Ascending aorta (tissue), 2 donors: ENCODE measurements at regions of chr18 and their contacts with region 1.

Region 1: GRCh38 chr18:3585656-3586509 is 135.9 kb downstream of the TGIF1 start:
- DNase-seq: peak in 1 of 2 donors; percentile 85
- H3K4me3 ChIP-seq: no peak overlapping the region
- H3K27ac ChIP-seq: no peak overlapping the region
- H3K4me1 ChIP-seq: no peaks in the 10 kb centered on the region
- H3K27me3 ChIP-seq: no peaks in the 10 kb centered on the region
- CTCF ChIP-seq: peak; percentile 41 to 63 (median 48)

Region 2: DNA sequence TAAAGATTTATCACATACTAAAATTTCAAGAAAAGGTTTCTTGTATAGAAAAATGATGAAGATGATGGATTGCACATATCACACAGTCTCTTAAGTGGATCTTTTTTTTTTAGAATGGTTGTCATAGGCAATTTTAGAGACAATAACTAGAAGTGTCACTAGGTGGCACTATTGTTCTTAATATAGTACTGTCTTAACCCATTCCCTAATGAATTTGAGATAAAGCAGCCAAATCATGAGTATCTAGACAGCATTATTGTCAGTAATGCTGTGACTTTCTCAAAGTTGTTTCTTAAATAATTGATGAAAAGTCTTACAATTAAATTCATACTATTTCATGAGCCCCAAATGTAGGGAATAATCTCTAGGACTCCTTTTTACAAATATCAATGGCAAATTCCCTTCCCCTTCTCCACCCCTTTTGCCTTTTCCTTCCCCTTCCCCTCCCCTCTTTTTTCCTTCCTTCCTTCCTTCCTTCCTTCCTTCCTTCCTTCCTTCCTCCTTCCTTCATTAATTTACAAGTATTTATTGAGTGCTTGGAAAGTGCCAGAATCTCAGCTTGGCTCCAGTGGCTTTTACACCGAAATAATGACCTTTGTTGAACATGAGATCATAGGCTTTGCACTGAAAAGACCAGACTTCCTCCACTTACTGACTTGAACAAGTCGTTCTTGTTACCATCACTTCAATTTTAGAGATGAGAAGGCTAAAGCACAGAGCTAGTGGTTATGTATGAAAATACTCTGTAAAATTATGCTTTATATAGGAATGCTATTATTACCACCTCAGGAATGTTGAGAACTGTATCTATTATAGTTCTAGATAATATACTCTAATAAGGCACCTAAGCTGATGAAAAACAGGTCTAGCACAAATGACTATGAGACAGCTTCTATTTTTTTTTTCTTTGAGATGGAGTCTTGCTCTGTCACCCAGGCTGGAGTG is 304.2 kb before region 1 on chr18:
- intact Hi-C with region 1: loop called (anchors 2 kb)
- DNase-seq: no peak
- H3K4me3 ChIP-seq: no peak overlapping the region
- H3K27ac ChIP-seq: no peak overlapping the region
- H3K4me1 ChIP-seq: peaks cover 0 to 3% of the 10 kb centered on the region in 2 donors
- H3K27me3 ChIP-seq: no peaks in the 10 kb centered on the region
- CTCF ChIP-seq: peak; percentile 54 to 71 (median 69)

Region 3: DNA sequence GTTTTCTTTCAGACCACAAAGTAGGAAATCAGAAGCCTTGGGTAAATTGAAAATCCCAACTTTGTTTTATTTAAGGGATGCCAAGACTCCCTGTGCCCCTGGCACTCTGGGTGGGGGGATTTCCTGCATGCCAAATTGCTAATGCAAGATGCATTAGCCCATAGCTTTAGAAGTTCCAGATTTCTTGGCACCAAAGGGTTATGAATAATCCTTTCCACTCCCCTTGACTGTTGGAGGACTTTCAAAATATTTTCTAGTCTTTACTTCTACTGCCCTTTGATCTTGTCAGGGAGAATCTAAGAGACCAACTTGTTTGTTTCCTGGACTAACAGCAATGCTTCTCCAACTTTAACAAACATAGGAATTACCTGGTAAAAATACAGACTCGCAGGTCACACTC is 217.7 kb before region 1 on chr18:
- intact Hi-C with region 1: no loop called
- DNase-seq: no peak
- H3K4me3 ChIP-seq: no peak overlapping the region
- H3K27ac ChIP-seq: no peak overlapping the region
- H3K4me1 ChIP-seq: no peaks in the 10 kb centered on the region
- H3K27me3 ChIP-seq: no peaks in the 10 kb centered on the region
- CTCF ChIP-seq: no peak

Region 4: GRCh38 chr18:4144201-4144600 is 558.3 kb after region 1 on chr18:
- intact Hi-C with region 1: no loop called
- DNase-seq: no peak
- H3K4me3 ChIP-seq: no peak overlapping the region
- H3K27ac ChIP-seq: no peak overlapping the region
- H3K4me1 ChIP-seq: no peaks in the 10 kb centered on the region
- H3K27me3 ChIP-seq: no peaks in the 10 kb centered on the region
- CTCF ChIP-seq: no peak